Activated T-helper 2 cell treated with anti-CD3 and anti-CD28 coated beads, Interferon-gamma antibody, Interleukin-2, Interleukin-4, amounts not matched to agents 10 μg/mL and 5 μg/mL and 100 μg/mL, durations not matched to agents 14 hours and 24 hours and 36 hours (primary cell): ENCODE measurements at regions of chr9 and their contacts with region 1.

Region 1: GRCh38 chr9:15606643-15607472 is 54.0 kb downstream of the CCDC171 start:
- DNase-seq: no peak
- H3K4me3 Mint-ChIP-seq: no peak overlapping the region
- H3K27ac Mint-ChIP-seq: no peak overlapping the region
- H3K4me1 Mint-ChIP-seq: peaks cover 17% of the 10 kb centered on the region
- H3K27me3 Mint-ChIP-seq: no peaks in the 10 kb centered on the region

Region 2: DNA sequence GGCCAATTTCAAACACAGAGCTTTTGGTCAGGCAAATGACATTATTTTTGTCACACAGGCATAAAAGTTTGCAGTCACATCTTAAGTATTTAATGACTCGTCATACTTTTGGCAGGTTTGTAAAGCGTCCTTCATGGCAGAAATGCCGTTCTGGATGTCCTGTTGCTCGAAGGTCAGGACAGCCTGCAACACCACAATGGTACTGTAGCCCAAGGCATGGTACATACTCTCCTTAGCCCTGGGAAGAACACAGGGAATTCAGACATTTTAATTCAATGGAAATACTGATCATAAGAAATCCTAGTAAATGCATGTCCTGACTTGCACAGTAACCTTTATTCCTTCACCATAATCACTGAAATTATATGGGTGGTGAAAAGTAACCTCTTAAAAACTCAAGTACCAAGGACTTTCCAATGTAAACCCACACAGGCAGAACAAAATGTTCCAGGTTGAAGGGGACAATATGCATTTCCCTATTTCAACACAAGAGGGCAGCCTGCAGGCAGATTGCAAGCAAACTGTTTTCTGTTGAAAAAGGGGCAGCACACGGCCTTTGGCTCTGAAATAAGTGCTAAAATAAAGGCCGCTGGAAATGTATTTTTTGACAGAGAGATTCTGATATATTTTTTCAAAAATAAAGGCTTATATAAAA is 395.6 kb before region 1 on chr9:
- intact Hi-C with region 1: loop called (anchors 1 kb)
- DNase-seq: peak; percentile 33
- H3K4me3 Mint-ChIP-seq: no peak overlapping the region
- H3K27ac Mint-ChIP-seq: no peak overlapping the region
- H3K4me1 Mint-ChIP-seq: peaks cover 11% of the 10 kb centered on the region
- H3K27me3 Mint-ChIP-seq: no peaks in the 10 kb centered on the region

Region 3: DNA sequence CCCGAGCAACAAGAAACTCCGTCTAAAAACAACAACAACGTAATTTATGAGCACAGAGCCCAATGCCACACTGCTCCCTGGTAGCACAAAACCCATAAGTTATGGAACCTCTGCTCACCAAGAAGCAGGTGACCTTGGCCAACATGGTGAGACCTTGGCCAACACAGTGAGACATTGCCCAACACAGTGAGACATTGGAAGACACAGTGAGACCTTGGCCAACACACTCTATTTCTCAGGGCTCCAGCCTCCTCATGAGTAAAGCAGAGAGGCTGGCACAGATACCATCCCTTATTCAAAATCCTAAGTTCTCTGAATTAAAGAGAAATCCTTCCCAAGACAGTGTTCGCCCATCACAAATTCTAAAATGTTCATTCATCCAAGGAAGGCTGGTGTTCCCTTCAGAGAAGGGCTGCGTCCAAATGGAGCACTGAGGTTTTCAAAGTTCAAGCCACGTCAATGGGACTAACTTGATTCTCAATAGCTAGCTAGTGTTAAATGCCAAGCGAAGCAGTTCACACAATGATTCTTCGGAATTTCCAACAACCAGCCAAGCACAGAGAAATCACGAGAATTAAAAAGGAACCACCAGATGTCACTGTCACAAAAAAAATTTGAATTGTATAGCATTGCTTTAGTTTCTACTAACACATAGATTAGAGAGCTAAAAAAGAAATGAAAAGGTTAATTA is 329.3 kb before region 1 on chr9:
- intact Hi-C with region 1: loop called (anchors 2 kb)
- DNase-seq: no peak
- H3K4me3 Mint-ChIP-seq: no peak overlapping the region
- H3K27ac Mint-ChIP-seq: no peak overlapping the region
- H3K4me1 Mint-ChIP-seq: peaks cover 15% of the 10 kb centered on the region
- H3K27me3 Mint-ChIP-seq: no peaks in the 10 kb centered on the region

Region 4: GRCh38 chr9:15485836-15486666 is 120.8 kb before region 1 on chr9:
- intact Hi-C with region 1: loop called (anchors 5 kb)
- DNase-seq: no peak
- H3K4me3 Mint-ChIP-seq: no peak overlapping the region
- H3K27ac Mint-ChIP-seq: peak overlapping the region; percentile 23
- H3K4me1 Mint-ChIP-seq: peaks cover 20% of the 10 kb centered on the region
- H3K27me3 Mint-ChIP-seq: no peaks in the 10 kb centered on the region

Region 5: DNA sequence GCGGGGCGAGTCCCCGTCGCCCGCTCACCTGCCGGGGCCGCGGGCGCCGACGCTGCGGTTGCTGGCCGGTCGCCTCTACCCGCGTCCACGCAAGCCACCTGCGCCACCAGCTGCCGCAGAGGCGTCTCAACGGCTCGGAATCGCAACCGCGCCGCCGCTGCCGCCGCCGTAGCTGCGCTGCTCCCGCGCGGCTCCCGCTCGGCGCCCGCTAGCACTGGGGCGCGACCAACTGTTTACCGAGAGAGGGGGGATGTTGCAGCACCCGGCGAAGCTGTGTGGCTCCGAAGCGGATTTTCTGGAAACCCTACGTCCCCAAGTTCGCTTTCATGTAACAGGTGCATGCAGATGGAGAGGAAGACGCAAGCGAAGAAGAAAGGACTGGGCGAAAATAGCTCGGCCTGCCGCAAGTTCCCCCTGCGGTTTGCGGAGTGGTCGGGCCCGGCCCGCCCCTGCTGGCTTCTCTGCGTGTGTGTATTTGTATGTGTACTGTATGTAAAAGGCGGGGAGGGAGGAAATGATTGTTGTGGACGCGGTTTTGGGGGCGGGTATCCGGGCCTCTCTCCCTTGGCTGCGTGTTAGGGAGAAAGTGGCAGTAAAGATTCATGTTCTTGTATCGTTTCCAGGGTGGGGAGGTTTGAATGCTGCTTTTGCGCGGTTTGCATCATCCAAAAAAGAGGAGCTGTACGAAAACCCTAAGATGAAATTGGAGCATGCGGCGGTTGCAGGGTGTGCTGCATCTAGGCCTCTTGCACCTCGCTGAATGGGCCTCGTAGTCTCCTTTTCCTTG is 95.9 kb before region 1 on chr9 and contains the start of gene PSIP1:
- intact Hi-C with region 1: loop called (anchors 2 kb)
- DNase-seq: peak; percentile 87
- H3K4me3 Mint-ChIP-seq: peak within 1 kb of the TSS; percentile 90
- H3K27ac Mint-ChIP-seq: peak within 1 kb of the TSS; percentile 98
- H3K4me1 Mint-ChIP-seq: peaks cover 46% of the 10 kb centered on the region
- H3K27me3 Mint-ChIP-seq: no peaks in the 10 kb centered on the region
- total RNA-seq, gene PSIP1: 112 and 118 TPM in 2 replicates

Region 6: GRCh38 chr9:15552636-15553527 is 54.0 kb before region 1 on chr9 and contains the start of gene CCDC171:
- intact Hi-C with region 1: loop called (anchors 1 kb)
- DNase-seq: peak; percentile 84
- H3K4me3 Mint-ChIP-seq: peak within 1 kb of the TSS; percentile 87
- H3K27ac Mint-ChIP-seq: peak within 1 kb of the TSS; percentile 73
- H3K4me1 Mint-ChIP-seq: peaks cover 9% of the 10 kb centered on the region
- H3K27me3 Mint-ChIP-seq: peaks cover 14% of the 10 kb centered on the region
- total RNA-seq, gene CCDC171: 1.8 and 2.0 TPM in 2 replicates